ENCODE measurements at regions of chr5 and their contacts with region 1.

Region 1: GRCh38 chr5:145834917-145835847 is at the start of gene PRELID2:
- DNase-seq: peak; percentile 76
- H3K4me3 Mint-ChIP-seq: peak within 1 kb of the TSS; percentile 53
- H3K27ac Mint-ChIP-seq: no peak within 1 kb of the TSS
- H3K4me1 Mint-ChIP-seq: peaks cover 11% of the 10 kb centered on the region
- H3K27me3 Mint-ChIP-seq: peaks cover 7% of the 10 kb centered on the region
- total RNA-seq, gene PRELID2: 3.8 to 4.3 TPM

Region 2: DNA sequence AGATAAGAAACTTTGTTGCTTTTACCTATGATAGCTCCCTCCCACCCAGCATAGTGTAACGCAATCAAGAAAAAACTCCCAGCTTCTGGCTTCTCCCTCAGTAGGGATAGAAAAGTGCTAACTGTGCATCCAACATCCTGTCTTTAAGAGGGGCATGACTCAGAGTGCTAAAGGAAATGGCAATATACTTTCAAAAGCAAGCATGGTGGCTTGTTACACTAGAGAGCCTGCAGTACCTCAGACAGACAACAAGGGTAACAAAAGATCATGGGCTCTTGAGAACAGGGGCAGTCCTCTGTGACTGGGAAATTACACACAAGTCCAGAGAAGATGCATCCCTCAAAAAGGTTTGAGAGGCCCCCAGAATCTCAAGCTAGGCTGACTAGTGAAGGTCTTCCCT is 37.8 kb before region 1 on chr5:
- CTCF ChIA-PET with region 1: no interaction called
- POLR2A ChIA-PET with region 1: no interaction called
- intact Hi-C with region 1: loop called (anchors 5 kb)
- DNase-seq: no peak
- H3K4me3 Mint-ChIP-seq: no peak overlapping the region
- H3K27ac Mint-ChIP-seq: no peak overlapping the region
- H3K4me1 Mint-ChIP-seq: no peaks in the 10 kb centered on the region
- H3K27me3 Mint-ChIP-seq: no peaks in the 10 kb centered on the region

Region 3: DNA sequence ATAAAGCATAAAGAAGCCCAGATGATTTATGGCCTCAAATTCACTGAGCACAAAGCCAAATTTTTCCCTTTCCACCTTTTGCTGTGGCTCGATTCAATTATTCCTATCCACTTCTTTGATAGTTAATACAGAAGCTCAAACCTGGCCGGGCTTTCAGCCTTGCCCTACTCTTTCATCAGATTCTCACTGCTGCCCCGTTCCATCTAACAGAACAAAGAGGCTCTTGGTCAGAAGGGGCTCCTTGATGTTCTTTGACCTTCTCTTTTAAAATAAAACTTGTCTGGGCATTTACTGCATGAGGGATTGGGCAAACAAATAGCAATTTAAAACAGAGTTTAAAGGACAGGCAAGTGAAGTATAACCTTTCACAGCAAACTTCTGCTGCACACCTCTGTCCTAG is 27.8 kb after region 1 on chr5:
- CTCF ChIA-PET with region 1: no interaction called
- POLR2A ChIA-PET with region 1: no interaction called
- intact Hi-C with region 1: no loop called
- DNase-seq: no peak
- H3K4me3 Mint-ChIP-seq: no peak overlapping the region
- H3K27ac Mint-ChIP-seq: no peak overlapping the region
- H3K4me1 Mint-ChIP-seq: no peaks in the 10 kb centered on the region
- H3K27me3 Mint-ChIP-seq: peaks cover 9% of the 10 kb centered on the region

Region 4: GRCh38 chr5:145991044-145991575 is 155.9 kb after region 1 on chr5:
- CTCF ChIA-PET with region 1: no interaction called
- POLR2A ChIA-PET with region 1: no interaction called
- intact Hi-C with region 1: no loop called
- DNase-seq: no peak
- H3K4me3 Mint-ChIP-seq: no peak overlapping the region
- H3K27ac Mint-ChIP-seq: no peak overlapping the region
- H3K4me1 Mint-ChIP-seq: no peaks in the 10 kb centered on the region
- H3K27me3 Mint-ChIP-seq: peaks cover 18% of the 10 kb centered on the region

Region 5: DNA sequence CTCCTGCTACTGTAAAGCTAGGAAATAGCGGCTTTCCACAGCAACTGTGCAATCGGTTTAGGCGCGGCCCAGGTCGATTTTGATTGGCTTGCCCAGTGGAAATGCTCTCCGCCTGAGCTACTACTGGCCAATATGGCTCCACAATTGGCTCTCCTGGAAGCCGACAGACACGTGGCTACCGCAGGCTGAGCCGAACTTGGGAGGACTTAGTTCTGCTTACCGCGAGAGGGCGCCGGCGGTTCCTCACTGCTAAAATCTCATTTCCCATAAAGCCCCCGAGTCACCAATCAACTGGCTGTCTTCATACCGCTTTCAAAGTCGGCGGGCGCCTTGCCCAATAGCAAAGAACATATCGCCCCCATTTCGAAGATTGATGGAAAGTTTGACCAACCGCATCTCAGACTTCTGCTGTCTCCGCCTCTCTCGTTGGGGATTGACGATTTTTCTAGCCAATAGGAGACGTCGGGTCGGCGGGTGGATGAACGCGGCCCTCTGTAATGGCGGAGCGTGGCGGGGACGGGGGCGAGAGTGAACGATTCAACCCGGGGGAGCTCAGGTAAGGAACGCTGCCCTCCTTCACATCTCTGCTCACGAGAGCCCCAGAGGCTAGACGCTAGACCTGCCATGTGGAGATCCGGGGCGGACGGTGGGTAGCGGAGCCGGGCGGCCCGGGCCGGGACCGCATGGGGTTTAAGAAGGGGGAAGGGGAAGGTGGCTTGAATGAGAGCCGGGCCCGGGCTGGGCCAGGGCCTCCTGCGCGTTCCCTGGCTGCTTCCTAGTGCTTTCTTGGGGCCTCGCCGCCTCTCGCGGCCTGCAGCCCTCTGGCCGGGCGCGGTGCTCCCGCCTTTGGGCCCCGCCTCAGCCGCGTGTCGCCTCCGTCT is 611.9 kb after region 1 on chr5 and contains the start of gene TCERG1:
- CTCF ChIA-PET with region 1: no interaction called
- POLR2A ChIA-PET with region 1: no interaction called
- intact Hi-C with region 1: loop called (anchors 10 kb)
- DNase-seq: peak; percentile 99
- H3K4me3 Mint-ChIP-seq: peak within 1 kb of the TSS; percentile 97
- H3K27ac Mint-ChIP-seq: peak within 1 kb of the TSS; percentile 98
- H3K4me1 Mint-ChIP-seq: peaks cover 37% of the 10 kb centered on the region
- H3K27me3 Mint-ChIP-seq: no peaks in the 10 kb centered on the region
- total RNA-seq, gene TCERG1: 93.3 to 99.4 TPM